CD8-positive, alpha-beta T cell (primary cell): ENCODE measurements at regions of chr9 and their contacts with region 1.

Region 1: DNA sequence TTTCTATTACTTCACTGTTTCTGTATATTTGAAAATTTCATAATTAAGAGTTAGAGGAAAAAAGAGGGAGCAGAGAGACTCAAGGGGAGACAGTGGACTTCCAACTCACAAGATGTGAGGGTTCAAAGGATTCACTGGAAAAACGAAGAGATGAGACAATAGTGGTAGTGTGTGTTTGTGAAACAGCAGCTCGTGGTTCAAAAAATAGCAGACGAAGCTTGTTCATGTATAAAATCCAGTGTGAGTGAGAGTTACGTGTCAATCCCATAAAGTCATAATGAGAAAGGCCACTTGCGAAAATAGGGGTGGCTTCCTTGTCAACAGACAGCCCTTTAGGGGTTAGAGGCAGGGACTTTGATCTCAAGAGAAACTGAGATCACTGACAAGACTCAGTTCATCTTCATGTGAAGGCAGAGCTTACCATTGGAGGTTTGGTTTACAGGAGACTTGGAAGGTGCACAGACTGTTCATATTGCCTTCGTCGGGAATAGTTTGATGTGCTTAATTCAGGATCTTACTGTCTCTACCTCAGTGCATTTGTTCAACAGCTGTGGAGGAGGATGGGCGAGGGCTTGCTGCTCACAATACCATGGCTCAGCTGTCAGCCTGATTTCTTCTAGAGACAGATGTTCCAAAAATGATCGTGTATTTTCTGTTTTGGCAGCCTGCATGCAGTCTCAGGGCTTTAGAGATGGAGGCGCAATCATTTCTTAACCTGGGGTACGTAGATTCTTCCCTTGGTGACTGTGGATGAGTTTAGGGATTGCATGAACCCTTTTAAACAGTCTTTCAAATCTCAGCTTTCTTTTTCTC is 105.7 kb upstream of the KLF9 start:
- DNase-seq: no peak
- ATAC-seq: no peak
- H3K4me3 ChIP-seq: no peak overlapping the region
- H3K4me3 Mint-ChIP-seq: no peak overlapping the region
- H3K27ac ChIP-seq: no peak overlapping the region
- H3K27ac Mint-ChIP-seq: no peak overlapping the region
- H3K4me1 ChIP-seq: no peaks in the 10 kb centered on the region
- H3K4me1 Mint-ChIP-seq: peaks cover 4% of the 10 kb centered on the region
- H3K27me3 ChIP-seq: no peaks in the 10 kb centered on the region
- H3K27me3 Mint-ChIP-seq: no peaks in the 10 kb centered on the region
- CTCF ChIP-seq: no peak

Region 2: DNA sequence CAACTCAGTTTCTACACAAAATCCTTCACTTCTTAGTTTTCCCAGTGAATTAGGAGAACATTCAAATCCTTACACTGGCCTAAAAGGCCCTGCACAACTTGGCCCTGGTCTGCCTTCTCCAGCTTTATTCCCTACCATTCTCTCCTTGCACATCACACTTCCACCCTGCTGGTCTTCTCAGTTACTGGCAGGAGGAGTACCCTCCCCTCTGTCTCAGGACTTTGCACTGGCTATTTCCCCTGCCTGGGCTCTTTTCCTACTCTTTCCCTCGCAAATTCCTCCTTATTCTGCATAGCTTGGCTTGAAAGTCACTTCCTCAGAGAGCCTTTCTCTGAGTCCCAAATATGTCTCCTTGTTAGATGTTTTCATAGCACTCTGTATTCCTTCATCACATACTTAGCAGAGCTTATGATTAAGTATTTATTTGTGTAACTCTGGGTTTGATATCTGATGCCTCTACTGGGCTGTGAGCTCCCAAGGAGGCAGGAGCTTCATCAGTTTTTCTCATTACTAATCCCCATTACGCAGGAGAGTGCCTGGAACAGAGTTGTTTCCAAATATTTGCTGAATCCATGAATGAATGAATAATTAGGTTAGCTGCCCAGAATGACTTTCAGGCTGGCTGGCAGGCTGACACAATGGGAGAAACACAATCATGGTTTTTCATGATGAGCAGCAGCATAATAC is 54.2 kb after region 1 on chr9:
- CTCF ChIA-PET with region 1: no interaction called
- POLR2A ChIA-PET with region 1: no interaction called
- intact Hi-C with region 1: no loop called
- DNase-seq: no peak
- ATAC-seq: no peak
- H3K4me3 ChIP-seq: no peak overlapping the region
- H3K4me3 Mint-ChIP-seq: no peak overlapping the region
- H3K27ac ChIP-seq: no peak overlapping the region
- H3K27ac Mint-ChIP-seq: no peak overlapping the region
- H3K4me1 ChIP-seq: no peaks in the 10 kb centered on the region
- H3K4me1 Mint-ChIP-seq: no peaks in the 10 kb centered on the region
- H3K27me3 ChIP-seq: no peaks in the 10 kb centered on the region
- H3K27me3 Mint-ChIP-seq: no peaks in the 10 kb centered on the region
- CTCF ChIP-seq: no peak

Region 3: DNA sequence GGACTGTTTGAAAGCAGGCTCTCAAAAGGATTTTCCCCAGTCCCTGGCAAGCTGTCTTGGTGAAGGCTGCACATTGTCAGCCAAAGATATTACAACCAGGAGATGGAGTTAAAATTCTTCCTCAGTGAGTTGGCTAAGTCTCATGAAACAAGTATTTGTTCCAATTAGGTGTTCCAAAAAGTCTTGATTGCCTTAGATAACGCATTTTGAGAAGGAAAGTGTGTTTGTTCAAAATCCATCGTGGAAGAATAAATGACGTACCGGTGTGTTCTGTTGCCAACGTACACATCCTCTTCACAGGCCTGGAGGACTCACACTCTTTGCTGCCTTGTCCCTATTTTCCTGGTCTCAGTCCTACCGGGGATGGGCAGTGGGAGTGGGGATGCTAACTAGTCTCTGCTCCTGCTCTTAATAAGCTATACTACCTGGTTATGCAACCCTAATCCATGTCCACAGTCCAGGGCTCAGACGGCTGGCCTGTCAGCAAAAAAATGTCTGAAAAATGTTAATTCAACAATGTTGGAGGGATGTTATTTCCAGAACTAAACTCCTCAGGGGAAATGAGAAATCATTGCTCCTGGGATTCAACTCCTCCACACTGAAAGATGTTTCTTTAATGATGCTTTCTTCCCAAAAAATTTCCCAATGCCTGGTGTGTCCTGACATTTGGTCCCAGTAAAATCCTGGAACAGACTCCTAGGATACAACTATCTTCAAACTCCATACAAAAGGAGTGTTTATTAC is 69.6 kb after region 1 on chr9:
- CTCF ChIA-PET with region 1: no interaction called
- POLR2A ChIA-PET with region 1: no interaction called
- intact Hi-C with region 1: loop called in 1 of 2 experiments (anchors 5 kb)
- DNase-seq: no peak
- ATAC-seq: no peak
- H3K4me3 ChIP-seq: no peak overlapping the region
- H3K4me3 Mint-ChIP-seq: no peak overlapping the region
- H3K27ac ChIP-seq: no peak overlapping the region
- H3K27ac Mint-ChIP-seq: no peak overlapping the region
- H3K4me1 ChIP-seq: no peaks in the 10 kb centered on the region
- H3K4me1 Mint-ChIP-seq: no peaks in the 10 kb centered on the region
- H3K27me3 ChIP-seq: no peaks in the 10 kb centered on the region
- H3K27me3 Mint-ChIP-seq: no peaks in the 10 kb centered on the region
- CTCF ChIP-seq: no peak